Endothelial cell of umbilical vein (primary cell): ENCODE measurements at regions of chrX and their contacts with region 1.

Region 1: DNA sequence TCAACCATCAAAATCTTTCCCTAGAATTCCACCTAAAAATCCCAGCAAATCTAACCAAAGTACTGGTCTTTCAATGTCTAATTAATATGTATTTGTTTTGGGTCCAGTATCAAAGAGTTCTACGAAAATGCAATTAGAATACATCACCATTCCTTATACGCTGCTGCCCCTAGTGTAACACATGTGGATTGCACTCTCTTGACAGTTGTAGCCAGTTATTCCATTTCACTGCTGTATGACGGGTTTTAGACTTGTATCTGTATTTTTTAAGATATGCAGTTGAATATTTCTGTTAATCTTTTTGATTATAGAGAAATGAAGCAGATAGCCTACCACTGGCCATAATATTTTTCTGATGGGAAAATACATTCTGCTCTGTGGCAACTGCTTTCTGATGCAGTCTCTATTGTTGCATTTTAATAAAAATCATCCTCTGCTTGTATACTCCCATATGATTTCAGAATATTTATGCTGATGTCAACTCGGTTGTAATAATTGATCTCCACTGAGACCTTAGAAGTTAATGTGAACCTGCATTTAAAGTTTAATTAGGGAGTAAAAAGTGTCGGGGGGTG is 17.1 kb upstream of the PAGE2B start:
- DNase-seq: peak; percentile 65
- H3K4me3 ChIP-seq: peak overlapping the region in 1 of 3 experiments; percentile 15
- H3K27ac ChIP-seq: peak overlapping the region; percentile 87
- H3K4me1 ChIP-seq: peaks cover 4% of the 10 kb centered on the region
- H3K27me3 ChIP-seq: no peaks in the 10 kb centered on the region
- CTCF ChIP-seq: peak; percentile 45 to 54
- POLR2A ChIP-seq: no peak

Region 2: GRCh38 chrX:54357414-54358377 is 700.1 kb before region 1 on chrX and contains the start of gene WNK3:
- CTCF ChIA-PET with region 1: no interaction called
- POLR2A ChIA-PET with region 1: no interaction called
- dilution Hi-C with region 1: no loop called
- intact Hi-C with region 1: loop called (anchors 5 kb)
- DNase-seq: peak; percentile 69
- H3K4me3 ChIP-seq: peak within 1 kb of the TSS; percentile 18 to 56 (median 44)
- H3K27ac ChIP-seq: no peak within 1 kb of the TSS
- H3K4me1 ChIP-seq: no peaks in the 10 kb centered on the region
- H3K27me3 ChIP-seq: peaks cover 3 to 6% of the 10 kb centered on the region in 2 experiments
- CTCF ChIP-seq: no peak
- POLR2A ChIP-seq: no peak
- total RNA-seq, gene WNK3: 2.6 and 2.7 TPM in 2 replicates

Region 3: DNA sequence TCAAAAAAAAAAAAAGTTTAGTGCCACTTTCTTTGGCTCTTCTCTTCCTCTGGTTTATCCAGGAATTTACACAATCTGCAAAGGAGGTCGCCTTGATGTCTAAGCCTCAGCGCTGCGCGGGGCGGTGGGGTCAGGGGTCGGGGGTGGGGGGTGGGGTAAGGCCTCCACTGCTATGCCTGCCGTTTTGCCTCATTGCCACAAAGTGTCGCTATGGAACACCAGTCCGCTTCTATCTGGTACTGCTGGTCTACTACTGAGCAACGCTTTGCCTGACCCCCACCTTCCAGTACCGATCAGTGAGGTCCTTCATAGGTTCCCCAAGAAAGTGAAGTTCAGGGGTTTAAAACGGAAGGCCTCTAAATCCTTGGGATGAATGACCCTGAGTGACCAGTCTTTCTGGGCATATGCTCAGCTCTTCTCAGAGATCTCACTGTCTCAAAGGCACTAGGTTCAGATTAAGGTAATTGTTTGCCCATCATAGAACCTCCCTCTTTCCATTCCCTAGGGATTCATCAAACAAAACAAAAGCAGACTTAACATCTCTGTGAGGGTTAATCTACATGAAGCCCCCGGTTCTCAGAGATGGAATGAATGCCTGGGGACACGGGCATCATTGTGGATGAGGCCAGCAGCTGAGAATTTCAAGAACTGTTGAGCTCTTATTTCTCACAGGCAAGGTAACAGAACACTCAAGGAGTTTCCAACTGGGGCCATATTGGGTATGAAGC is 634.4 kb before region 1 on chrX:
- CTCF ChIA-PET with region 1: no interaction called
- POLR2A ChIA-PET with region 1: no interaction called
- dilution Hi-C with region 1: no loop called
- intact Hi-C with region 1: loop called (anchors 2 kb)
- DNase-seq: peak; percentile 1
- H3K4me3 ChIP-seq: no peak overlapping the region
- H3K27ac ChIP-seq: no peak overlapping the region
- H3K4me1 ChIP-seq: no peaks in the 10 kb centered on the region
- H3K27me3 ChIP-seq: no peaks in the 10 kb centered on the region
- CTCF ChIP-seq: no peak
- POLR2A ChIP-seq: no peak

Region 4: GRCh38 chrX:54891573-54891972 is 166.2 kb before region 1 on chrX:
- CTCF ChIA-PET with region 1: interaction called, 33 read pairs
- POLR2A ChIA-PET with region 1: no interaction called
- dilution Hi-C with region 1: no loop called
- intact Hi-C with region 1: no loop called
- DNase-seq: peak; percentile 40
- H3K4me3 ChIP-seq: no peak overlapping the region
- H3K27ac ChIP-seq: no peak overlapping the region
- H3K4me1 ChIP-seq: no peaks in the 10 kb centered on the region
- H3K27me3 ChIP-seq: no peaks in the 10 kb centered on the region
- CTCF ChIP-seq: peak; percentile 23 to 38
- POLR2A ChIP-seq: no peak

Region 5: GRCh38 chrX:55008471-55009358 is 49.0 kb before region 1 on chrX:
- CTCF ChIA-PET with region 1: interaction called, 4 read pairs
- POLR2A ChIA-PET with region 1: no interaction called
- dilution Hi-C with region 1: no loop called
- intact Hi-C with region 1: loop called (anchors 2 kb)
- DNase-seq: peak; percentile 42
- H3K4me3 ChIP-seq: no peak overlapping the region
- H3K27ac ChIP-seq: peak overlapping the region; percentile 18
- H3K4me1 ChIP-seq: peaks cover 27% of the 10 kb centered on the region
- H3K27me3 ChIP-seq: no peaks in the 10 kb centered on the region
- CTCF ChIP-seq: no peak
- POLR2A ChIP-seq: no peak

Region 6: DNA sequence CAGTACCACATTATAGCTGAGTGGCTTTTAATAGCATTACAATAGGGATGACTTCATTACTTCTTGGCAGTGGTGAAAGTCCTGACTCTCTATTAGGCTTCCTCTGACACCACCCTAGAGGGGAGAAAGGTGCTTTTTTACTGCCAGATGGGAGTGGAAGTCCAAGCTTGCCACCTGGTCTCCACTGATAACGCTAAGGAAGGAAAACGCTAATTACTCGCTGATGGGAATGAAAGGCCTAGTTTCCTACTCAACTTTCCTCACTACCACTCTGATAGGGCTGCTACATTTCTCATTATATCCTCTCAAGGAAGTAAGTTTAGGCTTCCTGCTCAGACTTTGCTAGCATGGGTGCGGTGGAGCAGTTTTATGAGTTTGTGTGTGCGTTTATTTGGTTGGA is 269.2 kb after region 1 on chrX:
- CTCF ChIA-PET with region 1: no interaction called
- POLR2A ChIA-PET with region 1: no interaction called
- dilution Hi-C with region 1: no loop called
- intact Hi-C with region 1: loop called (anchors 1 kb)
- DNase-seq: peak; percentile 85
- H3K4me3 ChIP-seq: no peak overlapping the region
- H3K27ac ChIP-seq: no peak overlapping the region
- H3K4me1 ChIP-seq: no peaks in the 10 kb centered on the region
- H3K27me3 ChIP-seq: no peaks in the 10 kb centered on the region
- CTCF ChIP-seq: no peak
- POLR2A ChIP-seq: no peak